PC-9 (cell line): ENCODE measurements at regions of chr12 and their contacts with region 1.

Region 1: GRCh38 chr12:32679091-32679919 is at the start of gene DNM1L:
- DNase-seq: peak; percentile 87 to 99
- H3K4me3 ChIP-seq: peak within 1 kb of the TSS; percentile 82
- H3K27ac ChIP-seq: peak within 1 kb of the TSS; percentile 71
- H3K4me1 ChIP-seq: peaks cover 26% of the 10 kb centered on the region
- H3K27me3 ChIP-seq: no peaks in the 10 kb centered on the region
- CTCF ChIP-seq: no peak
- total RNA-seq, gene DNM1L: 95.8 and 112 TPM in 2 replicates

Region 2: DNA sequence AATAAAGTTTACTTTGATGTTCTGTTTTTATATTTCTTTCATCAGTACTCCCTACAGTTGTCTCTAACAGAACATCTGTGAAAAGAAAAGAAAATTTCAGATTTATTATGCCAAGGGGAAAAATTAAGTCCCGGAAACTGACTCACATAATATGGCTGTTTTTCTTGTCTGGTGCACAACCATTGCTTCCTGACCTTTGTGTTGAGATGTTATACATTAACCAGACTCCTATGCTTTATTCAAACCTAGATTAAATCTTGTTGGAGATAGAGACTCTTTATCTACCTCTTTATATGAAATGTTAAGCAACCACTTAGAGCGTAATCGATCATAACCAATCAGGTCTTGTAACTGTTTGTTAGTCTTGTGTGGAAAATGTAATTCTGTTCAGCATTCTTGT is 610.2 kb before region 1 on chr12:
- CTCF ChIA-PET with region 1: no interaction called
- POLR2A ChIA-PET with region 1: no interaction called
- intact Hi-C with region 1: loop called (anchors 10 kb)
- DNase-seq: no peak
- H3K4me3 ChIP-seq: no peak overlapping the region
- H3K27ac ChIP-seq: no peak overlapping the region
- H3K4me1 ChIP-seq: no peaks in the 10 kb centered on the region
- H3K27me3 ChIP-seq: no peaks in the 10 kb centered on the region
- CTCF ChIP-seq: no peak

Region 3: DNA sequence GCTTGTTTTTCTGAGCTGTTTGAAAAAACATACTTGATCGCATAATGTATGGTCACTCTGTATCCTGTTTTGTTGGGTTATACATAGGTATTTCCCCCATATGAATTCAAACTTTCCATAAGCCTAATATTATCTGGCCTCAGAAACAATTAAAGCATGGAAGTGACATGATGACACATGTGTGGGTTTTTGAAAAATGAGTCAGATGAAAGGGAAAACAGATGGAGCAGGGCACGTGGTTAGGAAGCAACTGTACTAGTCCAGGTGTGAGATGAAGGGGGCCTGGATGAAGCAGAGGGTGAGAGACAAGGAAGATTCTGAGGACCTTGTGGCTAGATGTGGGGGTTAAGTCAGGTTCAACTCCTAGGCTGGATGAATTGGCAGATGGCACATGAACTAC is 92.9 kb before region 1 on chr12:
- CTCF ChIA-PET with region 1: no interaction called
- POLR2A ChIA-PET with region 1: interaction called, 26 read pairs
- intact Hi-C with region 1: no loop called
- DNase-seq: no peak
- H3K4me3 ChIP-seq: no peak overlapping the region
- H3K27ac ChIP-seq: no peak overlapping the region
- H3K4me1 ChIP-seq: 0 out of 2 replicates have a peak, but pooled peaks cover 3% of the 10 kb centered on the region
- H3K27me3 ChIP-seq: no peaks in the 10 kb centered on the region
- CTCF ChIP-seq: no peak

Region 4: DNA sequence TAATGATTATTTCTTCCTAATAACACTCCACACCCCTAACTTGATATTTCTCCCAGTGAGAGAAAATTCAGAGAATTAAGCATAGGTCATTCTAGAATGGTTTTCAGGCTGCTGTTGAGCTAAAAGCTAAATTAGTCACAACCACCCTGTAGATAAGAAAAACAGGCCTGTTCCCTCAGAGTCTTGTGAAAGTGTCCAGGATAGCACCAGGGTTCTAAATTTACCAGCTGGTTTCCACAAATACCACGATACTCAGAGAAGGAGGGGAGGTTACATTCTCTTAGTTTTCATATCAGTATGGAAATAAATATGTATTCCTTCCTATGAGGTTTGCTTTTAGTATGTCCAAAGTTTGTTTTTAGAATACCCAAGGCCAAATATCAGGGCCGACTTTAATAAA is 142.4 kb after region 1 on chr12:
- CTCF ChIA-PET with region 1: interaction called, 11 read pairs
- POLR2A ChIA-PET with region 1: no interaction called
- intact Hi-C with region 1: no loop called
- DNase-seq: no peak
- H3K4me3 ChIP-seq: no peak overlapping the region
- H3K27ac ChIP-seq: no peak overlapping the region
- H3K4me1 ChIP-seq: no peaks in the 10 kb centered on the region
- H3K27me3 ChIP-seq: no peaks in the 10 kb centered on the region
- CTCF ChIP-seq: no peak